ENCODE measurements at regions of chr5 and their contacts with region 1.

Region 1: GRCh38 chr5:31334061-31334860 is 140.8 kb downstream of the CDH6 start:
- DNase-seq: no peak
- H3K4me3 ChIP-seq: no peak overlapping the region
- H3K27ac ChIP-seq: no peak overlapping the region
- H3K4me1 ChIP-seq: no peaks in the 10 kb centered on the region
- H3K27me3 ChIP-seq: no peaks in the 10 kb centered on the region
- CTCF ChIP-seq: no peak
- EP300 ChIP-seq: no peak
- POLR2A ChIP-seq: no peak
- RAD21 ChIP-seq: no peak

Region 2: DNA sequence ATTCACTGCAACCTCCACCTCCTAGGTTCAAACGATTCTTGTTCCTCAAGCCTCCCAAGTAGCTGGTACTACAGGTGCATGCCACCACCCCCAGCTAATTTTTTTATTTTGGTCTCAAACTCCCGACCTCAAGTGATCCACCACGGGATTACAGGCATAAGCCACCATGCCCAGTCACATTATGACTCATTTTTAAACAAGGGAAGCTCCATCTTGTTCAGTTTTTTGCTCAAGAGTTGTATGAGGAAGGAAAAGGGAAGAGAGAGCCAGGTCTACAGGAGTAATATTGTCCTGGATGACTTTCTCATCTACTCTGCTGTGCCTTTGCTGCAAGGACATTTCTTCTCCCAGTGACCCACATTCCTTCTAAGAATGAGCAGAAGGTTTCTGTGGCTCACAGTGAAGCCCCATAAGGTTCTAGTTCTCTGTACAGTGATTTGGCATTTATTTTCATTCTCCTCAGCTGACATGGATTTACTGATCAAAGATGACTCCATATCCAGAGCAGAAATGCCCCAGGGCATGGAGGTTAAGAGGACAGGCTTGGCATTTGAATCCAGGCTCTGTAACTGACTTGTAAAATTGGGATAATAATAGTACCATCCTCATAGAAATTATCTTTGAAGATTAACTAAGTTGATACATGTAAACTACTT is 12.8 kb after region 1 on chr5:
- CTCF ChIA-PET with region 1: interaction called, 10 read pairs
- POLR2A ChIA-PET with region 1: no interaction called
- DNase-seq: no peak
- H3K4me3 ChIP-seq: no peak overlapping the region
- H3K27ac ChIP-seq: no peak overlapping the region
- H3K4me1 ChIP-seq: no peaks in the 10 kb centered on the region
- H3K27me3 ChIP-seq: no peaks in the 10 kb centered on the region
- CTCF ChIP-seq: no peak
- EP300 ChIP-seq: no peak
- POLR2A ChIP-seq: no peak
- RAD21 ChIP-seq: no peak

Region 3: DNA sequence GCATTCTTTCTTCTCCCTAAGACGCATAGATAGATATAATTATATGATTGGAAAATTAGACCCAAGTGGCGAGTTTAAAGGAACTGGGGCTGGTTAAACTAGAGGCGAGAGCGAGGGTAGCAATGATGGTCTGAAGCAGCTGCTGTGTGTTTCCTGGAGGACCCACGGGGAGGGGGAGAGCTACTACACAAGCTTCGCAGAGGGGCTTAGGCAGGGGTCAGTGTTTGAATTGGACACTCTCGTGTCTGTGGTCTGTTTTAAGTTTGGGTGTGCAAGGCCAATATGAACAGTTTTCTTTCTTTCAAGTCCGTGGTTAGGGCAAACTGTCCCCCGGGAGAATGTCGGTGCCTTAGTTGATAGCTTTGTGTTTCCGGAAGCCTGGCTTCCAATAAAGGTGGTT is 347.8 kb after region 1 on chr5:
- CTCF ChIA-PET with region 1: no interaction called
- POLR2A ChIA-PET with region 1: no interaction called
- DNase-seq: no peak
- H3K4me3 ChIP-seq: no peak overlapping the region
- H3K27ac ChIP-seq: no peak overlapping the region
- H3K4me1 ChIP-seq: peaks cover 0 to 4% (median 1%) of the 10 kb centered on the region in 4 experiments; a peak in 4 of 7 replicates
- H3K27me3 ChIP-seq: no peaks in the 10 kb centered on the region
- CTCF ChIP-seq: no peak
- EP300 ChIP-seq: no peak
- POLR2A ChIP-seq: no peak
- RAD21 ChIP-seq: no peak